ENCODE measurements at regions of chr12 and their contacts with region 1.

Region 1: GRCh38 chr12:51823875-51824565 is 24.5 kb downstream of the FIGNL2 start:
- DNase-seq: peak; percentile 24
- H3K4me3 ChIP-seq: no peak overlapping the region
- CTCF ChIP-seq: peak; percentile 64

Region 2: GRCh38 chr12:51415931-51416330 is 408.1 kb before region 1 on chr12:
- CTCF ChIA-PET with region 1: interaction called, 188 read pairs
- POLR2A ChIA-PET with region 1: no interaction called
- DNase-seq: no peak
- H3K4me3 ChIP-seq: no peak overlapping the region
- CTCF ChIP-seq: no peak

Region 3: GRCh38 chr12:51430231-51430906 is 393.7 kb before region 1 on chr12:
- CTCF ChIA-PET with region 1: interaction called, 188 read pairs
- POLR2A ChIA-PET with region 1: no interaction called
- DNase-seq: no peak
- H3K4me3 ChIP-seq: no peak overlapping the region
- CTCF ChIP-seq: no peak

Region 4: GRCh38 chr12:51531978-51532497 is 292.0 kb before region 1 on chr12:
- CTCF ChIA-PET with region 1: interaction called, 26 read pairs
- POLR2A ChIA-PET with region 1: no interaction called
- DNase-seq: peak; percentile 21
- H3K4me3 ChIP-seq: no peak overlapping the region
- CTCF ChIP-seq: peak; percentile 92

Region 5: DNA sequence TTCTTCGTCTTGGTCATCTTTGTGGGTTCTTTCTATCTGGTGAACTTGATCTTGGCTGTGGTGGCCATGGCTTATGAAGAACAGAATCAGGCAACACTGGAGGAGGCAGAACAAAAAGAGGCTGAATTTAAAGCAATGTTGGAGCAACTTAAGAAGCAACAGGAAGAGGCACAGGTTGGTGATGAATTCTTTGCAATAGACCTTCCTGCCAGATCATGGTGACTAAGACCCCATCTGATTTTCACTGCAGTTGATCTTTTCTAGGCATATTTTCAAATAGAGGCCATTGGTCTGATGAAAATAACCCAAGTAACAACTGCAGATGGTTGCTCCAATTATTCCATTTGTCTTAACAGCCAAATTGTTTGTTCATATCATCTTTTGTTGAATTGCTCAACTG is 118.6 kb before region 1 on chr12:
- CTCF ChIA-PET with region 1: no interaction called
- POLR2A ChIA-PET with region 1: no interaction called
- DNase-seq: no peak
- H3K4me3 ChIP-seq: no peak overlapping the region
- CTCF ChIP-seq: no peak